HCT116 (cell line): ENCODE measurements at regions of chr3 and their contacts with region 1.

Region 1: GRCh38 chr3:39406368-39407258 is at the start of gene RPSA:
- DNase-seq: peak; percentile 93
- ATAC-seq: peak; percentile 94
- H3K4me3 ChIP-seq: peak within 1 kb of the TSS; percentile 73 to 98
- H3K27ac ChIP-seq: peak within 1 kb of the TSS; percentile 89
- H3K4me1 ChIP-seq: peaks cover 11 to 32% of the 10 kb centered on the region in 2 experiments
- H3K27me3 ChIP-seq: no peaks in the 10 kb centered on the region
- CTCF ChIP-seq: peak; percentile 8 to 22 (median 14); a peak in 3 of 6 replicates
- POLR2A ChIP-seq: peak; percentile 96
- RAD21 ChIP-seq: peak; percentile 53
- total RNA-seq, gene RPSA: 2,486 TPM

Region 2: DNA sequence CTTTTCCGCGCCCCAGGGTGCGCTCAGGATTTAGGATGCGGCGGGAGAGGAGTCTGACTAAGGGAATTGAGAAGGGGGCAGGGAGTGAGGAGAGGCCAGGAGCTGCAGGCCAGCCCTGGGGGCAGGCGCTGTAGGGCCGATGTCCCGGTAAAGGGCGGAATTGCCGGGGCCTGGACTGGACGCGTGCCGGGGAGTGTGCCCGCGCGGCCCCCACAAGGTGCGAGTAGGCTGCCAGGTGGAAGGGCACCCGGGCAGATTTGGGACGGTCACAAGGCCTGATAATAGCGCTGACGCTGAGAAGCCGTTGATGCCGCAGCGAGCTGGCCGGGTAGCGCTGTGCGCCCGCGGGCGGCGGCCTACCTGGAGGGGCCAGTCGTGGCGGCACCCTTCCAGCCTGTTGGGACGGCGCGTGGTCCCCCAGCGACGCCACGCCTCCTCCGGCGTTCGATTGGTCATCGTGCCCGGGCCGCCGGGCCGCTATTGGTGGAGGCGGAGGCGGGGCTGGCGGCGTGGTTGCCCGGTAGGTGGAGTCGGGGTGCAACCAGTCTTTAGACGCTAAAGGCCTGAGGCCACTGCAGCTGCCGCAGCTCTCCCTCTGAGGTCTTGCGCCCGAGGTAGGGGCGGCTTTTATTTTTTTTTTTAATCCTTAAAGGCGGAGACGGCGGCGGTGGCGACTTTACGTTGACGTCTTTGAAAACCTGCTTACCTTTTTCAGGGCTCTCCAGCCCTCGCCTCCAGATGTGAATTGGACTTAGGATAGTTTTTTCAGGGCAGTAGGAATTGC is 22.5 kb before region 1 on chr3:
- CTCF ChIA-PET with region 1: no interaction called
- POLR2A ChIA-PET with region 1: interaction called, 5 read pairs
- RAD21 ChIA-PET with region 1: no interaction called
- intact Hi-C with region 1: loop called (anchors 1 kb)
- DNase-seq: peak; percentile 82
- ATAC-seq: peak; percentile 81
- H3K4me3 ChIP-seq: peak overlapping the region; percentile 70 to 95
- H3K27ac ChIP-seq: peak overlapping the region; percentile 89
- H3K4me1 ChIP-seq: peaks cover 9 to 23% of the 10 kb centered on the region in 2 experiments; a peak in 3 of 4 replicates
- H3K27me3 ChIP-seq: no peaks in the 10 kb centered on the region
- CTCF ChIP-seq: no peak
- POLR2A ChIP-seq: no peak
- RAD21 ChIP-seq: no peak